Calu3 (cell line): ENCODE measurements at regions of chr4 and their contacts with region 1.

Region 1: DNA sequence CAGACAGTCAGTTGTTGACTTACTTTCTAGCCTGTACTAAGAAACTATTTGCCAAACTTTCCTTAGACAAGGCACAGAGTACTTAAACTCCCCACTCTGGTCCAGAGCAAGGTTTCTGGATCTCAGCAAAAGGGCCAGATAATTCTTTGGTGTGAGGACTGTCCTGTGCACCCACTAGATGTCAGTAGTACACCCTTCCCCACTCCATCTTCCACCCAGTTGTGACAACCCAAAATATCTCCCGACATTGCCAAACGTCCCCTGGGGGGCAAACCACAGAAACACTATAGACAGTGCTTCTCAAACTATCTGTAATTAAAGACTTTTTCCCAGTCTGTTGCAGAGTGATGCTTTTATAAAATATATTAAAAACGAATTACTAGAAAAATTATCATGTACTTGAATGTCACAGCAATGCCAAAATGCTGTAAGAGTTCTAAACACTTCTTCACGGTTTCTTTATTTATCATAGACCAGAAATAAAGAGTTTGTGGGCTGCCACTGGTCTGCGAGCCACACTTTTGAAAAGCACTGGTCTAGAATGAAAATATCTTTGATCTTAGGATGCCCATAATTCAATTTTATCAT is 203.5 kb downstream of the PRDM5 start:
- DNase-seq: peak; percentile 33
- H3K4me3 Mint-ChIP-seq: no peak overlapping the region
- H3K27ac Mint-ChIP-seq: no peak overlapping the region
- H3K4me1 Mint-ChIP-seq: no peaks in the 10 kb centered on the region
- H3K27me3 Mint-ChIP-seq: no peaks in the 10 kb centered on the region
- CTCF ChIP-seq: peak; percentile 37

Region 2: DNA sequence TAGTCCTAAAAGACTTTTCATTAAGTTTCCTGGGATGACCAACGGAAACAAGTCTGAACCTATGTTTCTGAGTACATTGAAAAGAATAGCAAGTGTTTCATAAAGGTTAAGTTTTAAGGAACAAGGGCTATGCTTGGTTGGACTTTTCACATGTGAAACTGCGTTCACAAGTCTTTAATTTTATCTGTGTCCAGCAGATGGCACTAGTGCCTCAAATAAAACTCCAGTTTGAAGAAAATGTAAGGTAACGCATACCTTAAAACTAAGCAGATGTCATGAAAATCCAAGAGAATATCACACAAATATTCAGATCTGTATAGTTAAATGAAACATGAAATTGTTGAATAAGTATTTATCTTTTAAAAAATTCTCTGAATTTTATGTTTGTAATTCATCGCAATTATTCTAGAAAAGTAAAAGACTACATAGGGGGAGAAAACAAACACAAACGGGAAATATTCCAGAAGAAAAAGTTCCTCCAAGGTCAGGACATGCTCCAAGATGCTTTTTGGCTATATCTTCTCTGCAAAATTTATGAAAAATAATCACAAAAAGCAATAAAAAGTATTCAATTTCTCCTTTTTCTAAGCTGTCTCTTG is 562.9 kb before region 1 on chr4:
- CTCF ChIA-PET with region 1: no interaction called
- intact Hi-C with region 1: loop called (anchors 10 kb)
- DNase-seq: peak; percentile 43
- H3K4me3 Mint-ChIP-seq: no peak overlapping the region
- H3K27ac Mint-ChIP-seq: no peak overlapping the region
- H3K4me1 Mint-ChIP-seq: no peaks in the 10 kb centered on the region
- H3K27me3 Mint-ChIP-seq: no peaks in the 10 kb centered on the region
- CTCF ChIP-seq: no peak

Region 3: GRCh38 chr4:120922381-120923206 is 203.5 kb after region 1 on chr4 and contains the start of gene PRDM5:
- CTCF ChIA-PET with region 1: no interaction called
- intact Hi-C with region 1: loop called (anchors 5 kb)
- DNase-seq: peak; percentile 51
- H3K4me3 Mint-ChIP-seq: peak within 1 kb of the TSS; percentile 85
- H3K27ac Mint-ChIP-seq: peak within 1 kb of the TSS; percentile 62
- H3K4me1 Mint-ChIP-seq: no peaks in the 10 kb centered on the region
- H3K27me3 Mint-ChIP-seq: no peaks in the 10 kb centered on the region
- CTCF ChIP-seq: no peak
- total RNA-seq, gene PRDM5: 8.3 and 8.7 TPM in 2 replicates

Region 4: GRCh38 chr4:121050300-121050699 is 331.2 kb after region 1 on chr4:
- CTCF ChIA-PET with region 1: no interaction called
- intact Hi-C with region 1: loop called (anchors 1 kb)
- DNase-seq: no peak
- H3K4me3 Mint-ChIP-seq: no peak overlapping the region
- H3K27ac Mint-ChIP-seq: no peak overlapping the region
- H3K4me1 Mint-ChIP-seq: no peaks in the 10 kb centered on the region
- H3K27me3 Mint-ChIP-seq: no peaks in the 10 kb centered on the region
- CTCF ChIP-seq: no peak

Region 5: GRCh38 chr4:121112530-121112929 is 393.5 kb after region 1 on chr4:
- CTCF ChIA-PET with region 1: no interaction called
- intact Hi-C with region 1: loop called (anchors 5 kb)
- DNase-seq: no peak
- H3K4me3 Mint-ChIP-seq: no peak overlapping the region
- H3K27ac Mint-ChIP-seq: no peak overlapping the region
- H3K4me1 Mint-ChIP-seq: no peaks in the 10 kb centered on the region
- H3K27me3 Mint-ChIP-seq: no peaks in the 10 kb centered on the region
- CTCF ChIP-seq: no peak